Dorsolateral prefrontal cortex (tissue), 120 donors: ENCODE measurements at regions of chr1 and their contacts with region 1.

Region 1: GRCh38 chr1:232950197-232951176 is at the start of gene NTPCR:
- DNase-seq: peak; percentile 79 to 95 (median 88)
- H3K4me3 ChIP-seq: peak within 1 kb of the TSS; percentile 71 to 100 (median 94)
- H3K27ac ChIP-seq: peak within 1 kb of the TSS in 56 of 59 donors; percentile 29 to 94 (median 86)
- H3K27me3 ChIP-seq: no peaks in the 10 kb centered on the region
- CTCF ChIP-seq: peak in 49 of 56 donors; percentile 4 to 66 (median 41)
- total RNA-seq, gene NTPCR: 39.5 to 83.5 (median 61.4) TPM

Region 2: DNA sequence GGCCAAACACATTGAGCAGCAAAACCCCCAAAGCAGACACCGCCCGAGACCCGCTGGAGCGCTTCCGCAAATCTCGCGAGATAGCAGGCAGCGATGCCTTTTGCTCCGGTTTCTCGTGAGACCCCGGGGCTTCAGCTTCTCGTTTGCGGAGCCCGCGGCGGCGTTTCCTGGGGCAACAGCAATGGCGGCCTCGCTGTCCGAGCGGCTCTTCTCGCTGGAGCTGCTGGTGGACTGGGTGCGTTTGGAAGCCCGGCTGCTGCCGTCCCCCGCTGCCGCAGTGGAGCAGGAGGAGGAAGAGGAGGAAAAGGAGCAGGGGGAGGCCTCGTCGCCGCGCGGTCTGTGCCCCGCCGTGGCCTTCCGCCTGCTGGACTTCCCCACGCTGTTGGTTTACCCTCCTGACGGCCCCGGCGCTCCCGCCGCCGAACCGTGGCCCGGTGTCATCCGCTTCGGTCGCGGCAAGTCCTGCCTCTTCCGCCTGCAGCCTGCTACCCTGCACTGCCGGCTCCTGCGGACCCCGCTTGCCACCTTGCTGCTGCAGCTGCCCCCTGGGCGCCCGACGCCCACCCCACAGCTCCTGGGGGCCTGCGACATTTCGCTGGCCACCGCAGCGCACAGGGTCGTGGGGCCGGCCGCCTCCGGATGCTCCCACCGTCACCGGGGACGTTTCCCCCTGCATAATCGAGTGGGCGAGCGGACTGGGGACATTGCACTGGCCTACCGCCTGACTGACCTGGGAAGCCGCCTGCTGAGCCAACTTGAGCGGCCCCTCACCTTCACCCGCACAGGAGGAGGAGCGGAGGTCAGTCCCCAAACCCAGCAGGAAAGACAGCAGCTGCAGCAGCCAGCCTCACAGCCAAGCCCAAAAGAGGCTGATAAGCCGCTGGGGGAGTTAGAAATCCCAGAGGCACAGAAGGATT is 145.0 kb before region 1 on chr1 and contains the start of gene MAP10:
- intact Hi-C with region 1: loop called in 1 of 2 experiments (anchors 10 kb)
- DNase-seq: peak; percentile 42 to 79 (median 70)
- H3K4me3 ChIP-seq: peak within 1 kb of the TSS; percentile 48 to 92 (median 79)
- H3K27ac ChIP-seq: peak within 1 kb of the TSS; percentile 27 to 97 (median 92)
- H3K27me3 ChIP-seq: no peaks in the 10 kb centered on the region
- CTCF ChIP-seq: peak in 6 of 56 donors; percentile 8 to 29 (median 19)
- total RNA-seq, gene MAP10: 1.3 to 7.8 (median 4.4) TPM